Activated B cell treated with CpG ODN at 0.5 μM for 24 hours (primary cell): ENCODE measurements at regions of chr18 and their contacts with region 1.

Region 1: DNA sequence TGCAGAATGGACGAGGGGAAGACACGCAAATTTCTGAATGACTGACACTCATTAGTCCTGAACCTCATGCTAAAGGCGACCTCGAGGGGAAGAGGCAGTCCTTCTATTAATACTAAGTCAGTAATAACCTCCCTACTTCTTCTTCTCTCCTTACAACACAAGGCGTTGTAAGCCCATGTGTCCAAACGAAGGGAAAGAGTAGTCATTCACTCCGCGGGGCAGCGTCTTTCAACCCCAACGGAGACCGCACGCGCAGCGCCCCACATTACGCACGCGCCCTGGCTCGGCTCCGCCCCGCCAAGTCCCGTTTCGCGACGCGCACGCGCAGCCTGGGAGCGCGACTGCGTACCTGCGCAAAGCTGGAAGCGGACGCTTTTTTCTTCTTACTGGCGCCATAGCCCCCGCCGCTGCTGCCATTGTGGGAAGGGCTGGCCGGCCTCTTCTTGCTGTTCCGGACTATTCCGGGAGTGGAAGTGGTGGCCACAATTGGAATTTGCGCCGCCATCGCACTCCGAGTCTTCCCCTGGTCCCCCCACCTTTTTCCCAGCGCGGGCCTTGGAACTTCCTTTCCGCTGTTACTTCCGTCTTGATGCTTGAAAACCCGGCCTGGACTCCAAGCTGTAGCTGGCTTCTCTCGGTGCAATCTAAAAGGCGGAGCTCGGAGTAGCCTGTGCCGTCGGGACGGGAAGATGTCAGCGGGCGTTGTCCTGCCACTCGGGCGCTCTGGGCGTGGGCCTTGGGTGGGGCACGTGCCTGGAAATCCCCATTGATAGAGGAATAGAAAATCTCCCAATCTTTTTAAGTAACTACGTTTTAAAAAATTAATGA is at the start of gene INO80C:
- DNase-seq: peak; percentile 95
- ATAC-seq: peak; percentile 88
- H3K4me3 Mint-ChIP-seq: peak within 1 kb of the TSS; percentile 100
- H3K27ac Mint-ChIP-seq: peak within 1 kb of the TSS; percentile 100
- H3K4me1 Mint-ChIP-seq: peaks cover 51% of the 10 kb centered on the region
- H3K27me3 Mint-ChIP-seq: no peaks in the 10 kb centered on the region
- CTCF ChIP-seq: no peak
- total RNA-seq, gene INO80C: 31.6 and 35.9 TPM in 2 replicates

Region 2: GRCh38 chr18:35106845-35107148 is 390.8 kb before region 1 on chr18:
- CTCF ChIA-PET with region 1: no interaction called
- POLR2A ChIA-PET with region 1: no interaction called
- intact Hi-C with region 1: no loop called
- DNase-seq: no peak
- ATAC-seq: no peak
- H3K4me3 Mint-ChIP-seq: no peak overlapping the region
- H3K27ac Mint-ChIP-seq: peak overlapping the region; percentile 74
- H3K4me1 Mint-ChIP-seq: peaks cover 30% of the 10 kb centered on the region
- H3K27me3 Mint-ChIP-seq: no peaks in the 10 kb centered on the region
- CTCF ChIP-seq: no peak

Region 3: GRCh38 chr18:35267161-35267651 is 230.4 kb before region 1 on chr18:
- CTCF ChIA-PET with region 1: no interaction called
- POLR2A ChIA-PET with region 1: interaction called, 6 read pairs
- intact Hi-C with region 1: loop called (anchors 1 kb)
- DNase-seq: peak; percentile 72
- ATAC-seq: peak; percentile 89
- H3K4me3 Mint-ChIP-seq: peak overlapping the region; percentile 94
- H3K27ac Mint-ChIP-seq: peak overlapping the region; percentile 93
- H3K4me1 Mint-ChIP-seq: peaks cover 26% of the 10 kb centered on the region
- H3K27me3 Mint-ChIP-seq: no peaks in the 10 kb centered on the region
- CTCF ChIP-seq: no peak

Region 4: DNA sequence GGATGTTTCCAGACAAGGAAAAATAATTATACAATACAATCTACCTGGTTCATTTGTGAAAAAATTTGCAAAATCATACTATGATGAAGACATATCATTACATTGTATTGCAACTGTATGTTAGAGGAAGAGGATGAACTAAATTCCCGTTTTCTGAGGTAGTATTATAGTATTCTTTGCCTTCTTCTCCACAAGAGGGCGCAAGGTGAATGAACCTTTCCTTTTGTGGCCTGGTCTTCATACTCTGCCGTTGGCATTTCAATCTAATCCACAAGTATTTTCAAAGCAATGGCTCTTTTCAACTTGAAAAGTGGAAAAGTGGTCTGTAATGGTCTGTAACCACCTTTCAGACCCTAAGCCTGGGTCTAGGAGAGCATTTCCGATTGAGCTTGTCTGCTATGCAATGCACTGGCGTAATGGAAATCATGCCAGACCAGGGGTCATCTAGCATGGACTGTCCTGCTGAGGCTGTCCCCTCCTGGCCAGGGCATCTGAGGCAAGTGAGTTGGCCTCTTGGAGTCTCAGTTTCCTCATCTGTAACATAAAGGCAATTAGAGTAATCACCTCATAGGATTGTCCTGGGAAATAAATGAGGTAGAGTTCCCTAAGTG is 89.6 kb before region 1 on chr18:
- CTCF ChIA-PET with region 1: interaction called, 3 read pairs
- POLR2A ChIA-PET with region 1: interaction called, 12 read pairs
- intact Hi-C with region 1: loop called (anchors 1 kb)
- DNase-seq: no peak
- ATAC-seq: peak; percentile 29
- H3K4me3 Mint-ChIP-seq: no peak overlapping the region
- H3K27ac Mint-ChIP-seq: no peak overlapping the region
- H3K4me1 Mint-ChIP-seq: peaks cover 44% of the 10 kb centered on the region
- H3K27me3 Mint-ChIP-seq: no peaks in the 10 kb centered on the region
- CTCF ChIP-seq: peak; percentile 67

Region 5: DNA sequence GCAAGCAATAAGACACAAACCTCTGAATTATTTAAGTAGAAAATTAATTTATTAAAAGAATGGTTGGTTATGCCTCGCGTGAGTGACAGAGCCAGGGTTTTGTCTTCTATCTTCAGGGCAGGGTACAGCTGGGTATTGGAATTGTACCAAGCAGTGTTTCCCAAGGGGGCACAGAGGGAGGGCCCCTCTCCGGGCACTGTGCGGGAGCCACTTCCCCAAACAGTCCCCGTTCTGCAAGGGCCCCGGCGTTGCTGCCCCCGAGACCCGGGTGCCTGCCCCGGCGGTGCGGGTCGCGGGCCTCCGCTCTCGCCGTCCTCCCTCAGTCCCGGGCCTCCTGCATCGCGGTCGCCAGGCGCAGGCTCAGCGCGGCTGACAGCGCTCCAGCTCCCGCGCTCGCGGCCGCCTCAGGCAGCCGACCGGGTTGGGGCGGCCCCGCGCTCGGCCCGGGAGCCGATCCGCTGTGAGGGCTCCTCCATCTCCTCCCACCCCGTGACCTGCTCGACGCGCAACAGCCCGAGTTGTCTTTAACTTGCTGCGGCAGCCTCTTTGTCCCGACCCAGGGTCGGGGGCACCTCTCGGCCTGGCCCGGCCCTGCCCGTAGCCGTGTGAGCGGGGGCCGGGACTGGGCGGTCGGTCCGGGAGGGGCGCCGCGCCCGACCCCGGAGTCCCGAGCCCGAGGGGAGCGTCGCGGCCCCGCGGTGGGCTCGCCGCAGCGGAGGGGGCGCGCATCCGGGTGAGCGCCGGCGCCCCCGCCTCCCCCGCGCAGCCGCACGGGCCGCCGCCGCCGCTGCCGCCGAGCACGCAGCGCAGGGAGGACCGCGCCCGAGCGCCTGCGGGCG is 83.3 kb after region 1 on chr18:
- CTCF ChIA-PET with region 1: interaction called, 3 read pairs
- POLR2A ChIA-PET with region 1: interaction called, 46 read pairs
- intact Hi-C with region 1: loop called (anchors 1 kb)
- DNase-seq: peak; percentile 73
- ATAC-seq: peak; percentile 71
- H3K4me3 Mint-ChIP-seq: peak overlapping the region; percentile 79
- H3K27ac Mint-ChIP-seq: peak overlapping the region; percentile 83
- H3K4me1 Mint-ChIP-seq: peaks cover 42% of the 10 kb centered on the region
- H3K27me3 Mint-ChIP-seq: no peaks in the 10 kb centered on the region
- CTCF ChIP-seq: no peak

Region 6: DNA sequence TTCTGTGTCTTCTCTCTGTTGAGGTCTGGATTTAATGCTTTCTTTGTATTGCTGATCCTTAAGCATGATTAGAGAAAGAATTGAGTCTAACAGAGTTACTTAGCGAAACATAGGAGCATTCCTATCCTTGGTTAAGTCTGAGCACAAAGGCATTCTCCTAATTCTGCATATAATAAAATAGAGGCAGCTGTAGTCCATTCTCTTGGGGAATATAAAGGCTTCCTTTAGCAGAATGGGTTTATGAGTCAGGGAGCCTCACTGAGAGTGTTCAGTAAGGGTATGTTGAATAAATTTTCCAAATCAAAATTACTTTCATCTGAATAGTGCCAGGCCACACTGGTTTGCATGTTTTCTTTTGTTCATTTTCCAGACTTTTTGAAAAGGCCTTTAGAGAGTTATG is 185.4 kb after region 1 on chr18:
- CTCF ChIA-PET with region 1: no interaction called
- POLR2A ChIA-PET with region 1: no interaction called
- intact Hi-C with region 1: no loop called
- DNase-seq: no peak
- ATAC-seq: no peak
- H3K4me3 Mint-ChIP-seq: no peak overlapping the region
- H3K27ac Mint-ChIP-seq: no peak overlapping the region
- H3K4me1 Mint-ChIP-seq: no peaks in the 10 kb centered on the region
- H3K27me3 Mint-ChIP-seq: no peaks in the 10 kb centered on the region
- CTCF ChIP-seq: no peak

Region 7: DNA sequence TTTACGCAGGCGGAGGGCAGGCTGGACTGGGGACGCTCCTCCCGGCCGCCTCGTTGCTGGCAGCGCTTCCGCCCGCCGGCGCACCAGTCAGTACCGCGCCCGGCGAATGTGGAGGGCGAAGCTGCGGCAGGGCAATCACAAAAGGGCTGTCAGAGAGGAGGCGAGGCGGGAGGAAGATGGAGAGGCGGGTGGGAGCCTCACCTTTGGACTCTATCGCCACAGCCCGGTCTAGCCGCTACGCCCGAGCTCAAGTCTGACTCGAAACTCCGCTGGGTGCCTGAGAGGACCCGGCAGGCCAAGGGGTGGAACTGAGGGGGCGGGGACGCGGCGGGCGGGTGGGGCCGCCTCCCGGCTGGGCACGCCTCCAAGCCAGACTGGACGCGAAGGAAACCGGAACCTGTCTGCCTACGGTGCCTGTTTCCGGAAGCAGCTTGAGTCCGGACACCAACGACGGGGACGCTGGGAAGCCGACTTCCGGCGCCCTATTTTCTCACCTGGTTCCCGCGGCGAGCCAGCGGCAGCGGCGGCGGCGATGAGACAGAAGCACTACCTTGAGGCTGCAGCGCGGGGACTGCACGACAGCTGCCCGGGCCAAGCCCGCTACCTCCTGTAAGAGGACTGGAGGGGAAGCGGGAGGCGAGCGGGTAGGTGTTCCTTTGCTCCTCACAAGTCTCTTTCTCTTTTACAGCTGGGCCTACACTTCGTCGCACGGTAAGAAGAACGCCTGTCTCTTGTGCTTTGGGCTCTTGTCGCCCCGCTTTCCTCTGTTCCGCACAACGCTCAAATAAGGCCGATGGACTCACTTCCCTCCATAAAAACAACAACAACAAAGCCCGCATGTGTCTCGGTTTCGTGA is 474.8 kb after region 1 on chr18 and contains the start of gene RMP24:
- CTCF ChIA-PET with region 1: no interaction called
- POLR2A ChIA-PET with region 1: interaction called, 12 read pairs
- intact Hi-C with region 1: loop called (anchors 1 kb)
- DNase-seq: peak; percentile 85
- ATAC-seq: peak; percentile 94
- H3K4me3 Mint-ChIP-seq: peak within 1 kb of the TSS; percentile 98
- H3K27ac Mint-ChIP-seq: peak within 1 kb of the TSS; percentile 97
- H3K4me1 Mint-ChIP-seq: peaks cover 50% of the 10 kb centered on the region
- H3K27me3 Mint-ChIP-seq: no peaks in the 10 kb centered on the region
- CTCF ChIP-seq: no peak